ENCODE measurements at regions of chr19 and their contacts with region 1.

Region 1: GRCh38 chr19:8580710-8581281 is 3.6 kb upstream of the MYO1F start:
- DNase-seq: peak; percentile 89
- H3K4me3 Mint-ChIP-seq: no peak overlapping the region
- H3K27ac Mint-ChIP-seq: no peak overlapping the region
- H3K4me1 Mint-ChIP-seq: peaks cover 30% of the 10 kb centered on the region
- H3K27me3 Mint-ChIP-seq: peaks cover 3% of the 10 kb centered on the region

Region 2: DNA sequence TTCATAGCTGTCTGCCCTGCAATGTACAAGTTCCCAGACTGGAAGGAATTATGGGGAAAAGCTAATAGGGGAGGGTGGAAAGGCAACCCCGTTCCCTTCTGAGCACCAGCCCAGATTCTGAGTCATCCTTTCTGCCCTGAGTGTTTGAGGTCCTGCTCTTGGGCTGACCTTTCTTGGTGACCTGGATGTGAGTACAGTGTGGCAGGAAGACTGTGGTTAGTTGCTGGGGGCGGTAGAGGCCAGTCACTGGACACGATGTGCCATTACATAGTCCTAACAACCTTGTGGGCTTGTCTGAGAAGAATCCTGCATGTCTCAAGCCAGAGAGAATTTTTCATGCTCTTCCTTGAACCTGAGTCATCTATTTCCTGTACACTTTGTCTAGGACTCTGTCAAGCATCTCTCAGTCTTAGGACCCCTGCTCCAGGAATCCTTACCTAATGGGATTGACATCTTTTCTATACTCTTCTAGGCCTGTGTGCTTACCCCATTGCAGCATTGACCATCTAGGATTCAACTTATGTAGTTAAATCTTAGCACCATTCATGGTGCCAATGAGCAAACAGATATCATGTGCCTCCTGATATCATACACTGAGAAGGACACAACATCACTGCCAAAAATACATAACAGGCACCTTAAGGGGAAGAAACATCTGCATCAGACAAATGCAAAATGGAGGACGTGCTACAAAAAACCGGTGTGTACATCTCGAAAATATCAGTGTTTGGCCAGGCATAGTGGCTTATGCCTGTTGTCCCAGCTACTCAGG is 225.0 kb before region 1 on chr19:
- CTCF ChIA-PET with region 1: interaction called, 28 read pairs
- POLR2A ChIA-PET with region 1: no interaction called
- DNase-seq: no peak
- H3K4me3 Mint-ChIP-seq: no peak overlapping the region
- H3K27ac Mint-ChIP-seq: no peak overlapping the region
- H3K4me1 Mint-ChIP-seq: peaks cover 13% of the 10 kb centered on the region
- H3K27me3 Mint-ChIP-seq: peaks cover 14% of the 10 kb centered on the region

Region 3: GRCh38 chr19:8444645-8445487 is 135.9 kb before region 1 on chr19 and contains the start of gene HNRNPM:
- CTCF ChIA-PET with region 1: interaction called, 6 read pairs
- POLR2A ChIA-PET with region 1: interaction called, 32 read pairs
- DNase-seq: peak; percentile 100
- H3K4me3 Mint-ChIP-seq: peak within 1 kb of the TSS; percentile 90
- H3K27ac Mint-ChIP-seq: peak within 1 kb of the TSS; percentile 96
- H3K4me1 Mint-ChIP-seq: peaks cover 39% of the 10 kb centered on the region
- H3K27me3 Mint-ChIP-seq: no peaks in the 10 kb centered on the region
- total RNA-seq, gene HNRNPM: 205 to 211 TPM

Region 4: GRCh38 chr19:8505680-8506401 is 75.0 kb before region 1 on chr19:
- CTCF ChIA-PET with region 1: interaction called, 5 read pairs
- POLR2A ChIA-PET with region 1: interaction called, 12 read pairs
- DNase-seq: peak; percentile 64
- H3K4me3 Mint-ChIP-seq: peak overlapping the region; percentile 77
- H3K27ac Mint-ChIP-seq: peak overlapping the region; percentile 61
- H3K4me1 Mint-ChIP-seq: peaks cover 22% of the 10 kb centered on the region
- H3K27me3 Mint-ChIP-seq: no peaks in the 10 kb centered on the region

Region 5: GRCh38 chr19:8544168-8544567 is 36.6 kb before region 1 on chr19:
- CTCF ChIA-PET with region 1: interaction called, 25 read pairs
- POLR2A ChIA-PET with region 1: interaction called, 15 read pairs
- DNase-seq: no peak
- H3K4me3 Mint-ChIP-seq: no peak overlapping the region
- H3K27ac Mint-ChIP-seq: no peak overlapping the region
- H3K4me1 Mint-ChIP-seq: no peaks in the 10 kb centered on the region
- H3K27me3 Mint-ChIP-seq: no peaks in the 10 kb centered on the region

Region 6: GRCh38 chr19:8592231-8593009 is 11.6 kb after region 1 on chr19:
- CTCF ChIA-PET with region 1: interaction called, 41 read pairs
- POLR2A ChIA-PET with region 1: interaction called, 4 read pairs
- DNase-seq: peak; percentile 84
- H3K4me3 Mint-ChIP-seq: peak overlapping the region; percentile 48
- H3K27ac Mint-ChIP-seq: no peak overlapping the region
- H3K4me1 Mint-ChIP-seq: peaks cover 11% of the 10 kb centered on the region
- H3K27me3 Mint-ChIP-seq: peaks cover 9% of the 10 kb centered on the region

Region 7: GRCh38 chr19:8697671-8698432 is 117.1 kb after region 1 on chr19:
- CTCF ChIA-PET with region 1: interaction called, 17 read pairs
- POLR2A ChIA-PET with region 1: no interaction called
- DNase-seq: peak; percentile 32
- H3K4me3 Mint-ChIP-seq: no peak overlapping the region
- H3K27ac Mint-ChIP-seq: no peak overlapping the region
- H3K4me1 Mint-ChIP-seq: peaks cover 64% of the 10 kb centered on the region
- H3K27me3 Mint-ChIP-seq: peaks cover 6% of the 10 kb centered on the region

Region 8: GRCh38 chr19:8731428-8732169 is 150.8 kb after region 1 on chr19:
- CTCF ChIA-PET with region 1: no interaction called
- POLR2A ChIA-PET with region 1: no interaction called
- DNase-seq: peak; percentile 18
- H3K4me3 Mint-ChIP-seq: no peak overlapping the region
- H3K27ac Mint-ChIP-seq: no peak overlapping the region
- H3K4me1 Mint-ChIP-seq: no peaks in the 10 kb centered on the region
- H3K27me3 Mint-ChIP-seq: no peaks in the 10 kb centered on the region